Endothelial cell of umbilical vein (primary cell): ENCODE measurements at regions of chr3 and their contacts with region 1.

Region 1: GRCh38 chr3:135895106-135895733 is 70.3 kb upstream of the PPP2R3A start:
- DNase-seq: peak; percentile 78
- H3K4me3 ChIP-seq: no peak overlapping the region
- H3K27ac ChIP-seq: no peak overlapping the region
- H3K4me1 ChIP-seq: no peaks in the 10 kb centered on the region
- H3K27me3 ChIP-seq: peaks cover 0 to 2% of the 10 kb centered on the region in 2 experiments
- CTCF ChIP-seq: peak; percentile 77 to 88
- POLR2A ChIP-seq: no peak

Region 2: GRCh38 chr3:135736740-135737139 is 158.5 kb before region 1 on chr3:
- CTCF ChIA-PET with region 1: no interaction called
- POLR2A ChIA-PET with region 1: no interaction called
- dilution Hi-C with region 1: no loop called
- intact Hi-C with region 1: loop called (anchors 10 kb)
- DNase-seq: no peak
- H3K4me3 ChIP-seq: no peak overlapping the region
- H3K27ac ChIP-seq: no peak overlapping the region
- H3K4me1 ChIP-seq: no peaks in the 10 kb centered on the region
- H3K27me3 ChIP-seq: no peaks in the 10 kb centered on the region
- CTCF ChIP-seq: no peak
- POLR2A ChIP-seq: no peak

Region 3: DNA sequence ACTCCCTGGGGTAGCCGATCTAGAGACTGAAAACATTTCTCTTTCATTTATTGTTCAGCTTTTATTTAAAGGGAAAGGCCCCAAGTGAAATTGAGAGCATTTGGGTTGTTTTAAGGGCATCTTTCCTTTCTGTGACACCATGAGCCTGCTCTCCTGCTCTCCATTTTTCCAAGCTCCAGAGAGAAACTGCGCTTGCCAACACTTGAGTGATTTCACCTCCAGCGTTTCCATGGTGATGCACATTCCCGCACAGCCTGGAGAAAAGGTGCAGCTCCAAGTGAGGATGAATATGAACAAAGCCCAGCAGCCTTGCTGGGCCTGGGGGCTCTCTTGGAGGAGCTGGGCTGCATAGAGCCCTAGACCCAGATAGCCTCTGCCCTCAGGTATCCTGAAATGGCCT is 88.9 kb before region 1 on chr3:
- CTCF ChIA-PET with region 1: no interaction called
- POLR2A ChIA-PET with region 1: no interaction called
- dilution Hi-C with region 1: no loop called
- intact Hi-C with region 1: no loop called
- DNase-seq: no peak
- H3K4me3 ChIP-seq: no peak overlapping the region
- H3K27ac ChIP-seq: no peak overlapping the region
- H3K4me1 ChIP-seq: no peaks in the 10 kb centered on the region
- H3K27me3 ChIP-seq: no peaks in the 10 kb centered on the region
- CTCF ChIP-seq: no peak
- POLR2A ChIP-seq: no peak